Common myeloid progenitor, CD34-positive (primary cell): ENCODE measurements at regions of chr19 and their contacts with region 1.

Region 1: DNA sequence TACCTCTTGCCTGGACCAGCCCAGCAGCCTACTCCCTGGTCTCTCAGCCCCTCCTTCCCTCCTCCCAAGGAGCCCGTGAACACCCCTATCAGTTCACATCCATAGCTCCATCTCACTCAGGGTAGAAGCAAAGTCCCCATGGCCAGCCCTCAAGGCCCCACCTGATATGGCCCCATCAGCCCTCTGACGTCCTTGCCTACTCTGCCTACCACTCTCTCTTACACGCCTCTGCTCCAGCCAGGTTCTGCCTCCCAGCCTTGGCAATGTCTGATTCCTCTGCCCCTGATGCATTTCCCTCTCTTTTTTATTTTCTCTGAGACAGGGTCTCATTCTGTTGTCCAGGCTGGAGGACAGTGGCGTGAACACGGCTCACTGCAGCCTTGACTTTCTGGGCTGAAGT is 7.9 kb upstream of the SERTAD3 start:
- DNase-seq: no peak
- H3K4me3 ChIP-seq: no peak overlapping the region
- H3K27ac ChIP-seq: no peak overlapping the region
- H3K4me1 ChIP-seq: no peaks in the 10 kb centered on the region
- H3K27me3 ChIP-seq: no peaks in the 10 kb centered on the region

Region 2: DNA sequence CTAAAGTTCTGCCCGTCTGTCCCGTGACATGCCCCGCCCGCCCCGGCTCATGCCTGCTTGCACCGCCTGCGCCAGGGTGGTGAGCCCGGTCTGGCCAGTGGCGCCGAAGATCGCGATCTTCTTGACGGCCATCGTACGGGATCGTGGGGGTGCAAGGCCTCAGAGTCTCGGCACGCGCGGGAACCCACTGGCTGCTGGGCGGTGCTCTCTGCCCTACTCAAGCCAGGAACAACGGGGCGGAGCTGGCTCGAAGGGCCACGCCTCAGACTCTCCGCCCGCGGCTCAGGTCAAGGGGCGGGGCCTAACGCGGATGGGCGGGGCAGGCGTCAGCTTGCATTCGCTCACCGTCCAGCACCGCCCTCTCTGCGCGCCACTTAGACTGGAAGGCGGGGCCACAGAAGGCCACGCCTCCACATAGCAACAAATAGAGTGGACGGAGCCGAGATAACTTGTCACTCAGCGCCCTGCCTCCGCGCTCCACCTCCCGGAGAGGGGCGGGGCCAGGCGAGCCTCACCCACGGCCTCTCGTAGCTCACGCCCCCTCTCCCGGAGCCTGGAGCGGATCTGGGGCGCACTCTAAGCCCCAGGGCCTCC is 13.6 kb after region 1 on chr19 and contains the start of gene BLVRB:
- CTCF ChIA-PET with region 1: interaction called, 38 read pairs
- POLR2A ChIA-PET with region 1: no interaction called
- DNase-seq: peak; percentile 99
- H3K4me3 ChIP-seq: peak within 1 kb of the TSS; percentile 38 to 81 (median 73)
- H3K27ac ChIP-seq: peak within 1 kb of the TSS in 1 of 2 experiments; percentile 80
- H3K4me1 ChIP-seq: peaks cover 5 to 36% (median 28%) of the 10 kb centered on the region in 4 experiments
- H3K27me3 ChIP-seq: peaks cover 0 to 27% (median 12%) of the 10 kb centered on the region in 5 experiments